CD14-positive monocyte (primary cell): ENCODE measurements at regions of chr1 and their contacts with region 1.

Region 1: GRCh38 chr1:19651141-19651737 is 7.1 kb downstream of the NBL1 start:
- DNase-seq: peak in 2 of 3 donors; percentile 4 to 15
- H3K4me3 ChIP-seq: no peak overlapping the region
- H3K4me3 Mint-ChIP-seq: no peak overlapping the region
- H3K27ac ChIP-seq: no peak overlapping the region
- H3K27ac Mint-ChIP-seq: no peak overlapping the region
- H3K4me1 ChIP-seq: no peaks in the 10 kb centered on the region
- H3K4me1 Mint-ChIP-seq: peaks cover 9% of the 10 kb centered on the region
- H3K27me3 ChIP-seq: peaks cover 6 to 21% of the 10 kb centered on the region in 2 donors
- H3K27me3 Mint-ChIP-seq: peaks cover 23 to 45% (median 26%) of the 10 kb centered on the region in 3 donors
- CTCF ChIP-seq: peak; percentile 51

Region 2: GRCh38 chr1:19341201-19342072 is 309.8 kb before region 1 on chr1:
- intact Hi-C with region 1: loop called (anchors 5 to 10 kb)
- DNase-seq: peak; percentile 51 to 60 (median 58)
- H3K4me3 ChIP-seq: no peak overlapping the region
- H3K4me3 Mint-ChIP-seq: no peak overlapping the region
- H3K27ac ChIP-seq: no peak overlapping the region
- H3K27ac Mint-ChIP-seq: peak overlapping the region in 5 of 7 donors; percentile 7 to 82 (median 66)
- H3K4me1 ChIP-seq: peaks cover 8 to 11% of the 10 kb centered on the region in 2 donors
- H3K4me1 Mint-ChIP-seq: peaks cover 9% of the 10 kb centered on the region
- H3K27me3 ChIP-seq: no peaks in the 10 kb centered on the region
- H3K27me3 Mint-ChIP-seq: no peaks in the 10 kb centered on the region
- CTCF ChIP-seq: peak; percentile 99